PC-9 (cell line): ENCODE measurements at regions of chrX and their contacts with region 1.

Region 1: GRCh38 chrX:15947648-15948317 is 93.2 kb upstream of the AP1S2 start:
- DNase-seq: peak in 1 of 2 experiments; percentile 34
- H3K4me3 ChIP-seq: no peak overlapping the region
- H3K27ac ChIP-seq: 0 out of 2 replicates have a peak overlapping the region, but pooled peaks have one; percentile 12
- H3K4me1 ChIP-seq: peaks cover 11% of the 10 kb centered on the region
- H3K27me3 ChIP-seq: no peaks in the 10 kb centered on the region
- CTCF ChIP-seq: no peak

Region 2: GRCh38 chrX:16023790-16024734 is 76.3 kb after region 1 on chrX:
- CTCF ChIA-PET with region 1: no interaction called
- POLR2A ChIA-PET with region 1: no interaction called
- intact Hi-C with region 1: loop called (anchors 5 kb)
- DNase-seq: peak in 1 of 2 experiments; percentile 18
- H3K4me3 ChIP-seq: no peak overlapping the region
- H3K27ac ChIP-seq: peak overlapping the region; percentile 55
- H3K4me1 ChIP-seq: peaks cover 14% of the 10 kb centered on the region; the same call in 1 of the 2 replicates
- H3K27me3 ChIP-seq: no peaks in the 10 kb centered on the region
- CTCF ChIP-seq: no peak